A549 (cell line): ENCODE measurements at regions of chr2 and their contacts with region 1.

Region 1: DNA sequence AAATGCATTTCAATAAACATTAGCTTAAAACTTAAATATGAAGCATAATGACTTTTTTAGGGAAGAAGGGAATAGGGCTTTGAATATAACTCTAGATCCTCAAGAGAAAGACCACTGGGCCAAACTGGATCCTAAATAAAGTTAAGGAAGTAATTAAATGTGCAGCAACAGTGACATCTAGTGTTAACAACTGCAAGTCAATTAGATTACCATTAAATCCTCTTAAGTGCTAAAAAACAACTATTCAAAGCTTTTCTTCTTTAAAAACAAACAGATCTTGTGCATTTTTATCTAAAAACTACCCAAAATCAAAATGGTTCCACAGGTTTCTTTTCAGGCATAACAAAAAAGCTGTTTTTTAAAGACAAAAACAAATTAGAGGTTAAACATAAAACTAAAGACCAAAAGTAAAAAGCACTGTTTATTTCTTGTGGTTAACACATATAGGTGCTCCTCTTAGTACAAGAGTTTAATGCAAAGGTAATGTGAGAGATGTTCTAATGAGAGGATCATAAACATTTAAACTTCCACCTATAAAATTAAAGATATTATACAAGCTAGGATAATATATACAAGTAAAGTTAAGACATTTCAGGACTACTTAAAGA is 111.4 kb downstream of the THADA start:
- DNase-seq: peak; percentile 15 to 85
- ATAC-seq: peak in 1 of 2 experiments; percentile 80; a peak in 3 of 6 replicates
- H3K4me3 ChIP-seq: no peak overlapping the region
- H3K27ac ChIP-seq: peak overlapping the region in 1 of 2 experiments; percentile 46; a peak in 2 of 6 replicates
- H3K4me1 ChIP-seq: peaks cover 22% of the 10 kb centered on the region
- CTCF ChIP-seq: peak; percentile 96
- EP300 ChIP-seq: no peak
- POLR2A ChIP-seq: no peak
- RAD21 ChIP-seq: peak; percentile 87 to 97

Region 2: GRCh38 chr2:42944779-42945415 is 539.5 kb before region 1 on chr2:
- CTCF ChIA-PET with region 1: interaction called, 69 read pairs
- POLR2A ChIA-PET with region 1: no interaction called
- DNase-seq: peak; percentile 44 to 60
- ATAC-seq: peak; percentile 48 to 79; a peak in 4 of 6 replicates
- H3K4me3 ChIP-seq: no peak overlapping the region
- H3K27ac ChIP-seq: no peak overlapping the region
- H3K4me1 ChIP-seq: no peaks in the 10 kb centered on the region
- CTCF ChIP-seq: no peak
- EP300 ChIP-seq: no peak
- POLR2A ChIP-seq: no peak
- RAD21 ChIP-seq: no peak

Region 3: DNA sequence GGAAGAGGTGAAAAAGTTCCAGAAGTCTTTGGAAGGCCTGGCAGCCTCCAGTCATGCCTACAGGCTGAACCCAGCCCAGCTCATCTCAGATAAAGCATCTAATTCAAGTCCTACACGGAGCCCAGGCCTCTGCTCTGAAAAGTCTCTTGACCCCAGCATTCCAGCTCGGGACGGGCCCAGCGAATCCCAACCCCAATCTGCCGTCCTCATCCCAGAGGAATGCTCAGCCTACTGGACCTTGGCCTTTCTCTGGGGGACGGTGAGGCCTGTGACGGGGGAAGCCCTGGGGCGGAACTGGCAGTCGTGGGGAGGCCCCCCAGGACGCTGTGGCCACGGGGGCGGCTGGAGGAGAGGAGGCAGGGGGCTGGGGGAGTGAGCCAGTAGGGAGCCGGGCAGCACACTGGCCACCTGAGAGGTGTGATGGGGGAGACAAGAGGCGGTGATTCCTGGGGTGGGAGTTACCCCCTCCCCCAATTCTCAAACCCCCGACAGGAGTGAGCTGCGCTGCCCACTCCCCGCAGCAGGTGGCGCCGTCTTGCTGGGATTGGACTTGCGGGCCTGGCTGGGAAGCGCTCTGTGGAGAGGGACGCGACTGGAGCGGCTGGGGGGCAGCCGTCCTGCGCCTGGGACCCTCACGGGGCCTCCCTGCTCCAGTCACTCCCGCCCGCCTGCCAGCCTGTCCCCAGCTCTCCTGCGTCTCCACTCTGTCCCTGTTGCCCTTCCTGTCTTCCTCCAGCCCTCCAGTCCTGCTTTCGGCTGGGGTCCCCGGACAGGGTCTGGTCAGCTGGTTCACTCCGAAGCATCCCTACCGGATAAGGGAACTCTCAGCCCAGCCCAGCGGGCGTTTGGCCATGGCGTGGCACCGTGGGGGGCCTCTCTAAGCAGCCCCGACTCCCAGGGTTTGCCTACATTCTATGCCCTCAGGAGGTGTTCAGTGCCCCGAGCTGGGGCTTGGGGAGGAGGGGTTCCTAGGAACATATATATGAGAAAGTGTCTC is 509.4 kb before region 1 on chr2:
- CTCF ChIA-PET with region 1: interaction called, 43 read pairs
- POLR2A ChIA-PET with region 1: no interaction called
- DNase-seq: peak; percentile 58 to 64
- ATAC-seq: peak; percentile 60 to 86
- H3K4me3 ChIP-seq: peak overlapping the region; percentile 31
- H3K27ac ChIP-seq: peak overlapping the region; percentile 73 to 87
- H3K4me1 ChIP-seq: peaks cover 37% of the 10 kb centered on the region
- CTCF ChIP-seq: peak; percentile 94
- EP300 ChIP-seq: no peak
- POLR2A ChIP-seq: no peak
- RAD21 ChIP-seq: peak; percentile 99

Region 4: GRCh38 chr2:43265001-43265400 is 219.4 kb before region 1 on chr2:
- CTCF ChIA-PET with region 1: interaction called, 10 read pairs
- POLR2A ChIA-PET with region 1: no interaction called
- DNase-seq: no peak
- ATAC-seq: no peak
- H3K4me3 ChIP-seq: no peak overlapping the region
- H3K27ac ChIP-seq: no peak overlapping the region
- H3K4me1 ChIP-seq: peaks cover 1% of the 10 kb centered on the region; the same call in 1 of the 3 replicates
- CTCF ChIP-seq: no peak
- EP300 ChIP-seq: no peak
- POLR2A ChIP-seq: no peak
- RAD21 ChIP-seq: no peak

Region 5: GRCh38 chr2:43444989-43445645 is 39.3 kb before region 1 on chr2:
- CTCF ChIA-PET with region 1: interaction called, 12 read pairs
- POLR2A ChIA-PET with region 1: no interaction called
- DNase-seq: no peak
- ATAC-seq: no peak
- H3K4me3 ChIP-seq: no peak overlapping the region
- H3K27ac ChIP-seq: no peak overlapping the region
- H3K4me1 ChIP-seq: peaks cover 46% of the 10 kb centered on the region
- CTCF ChIP-seq: no peak
- EP300 ChIP-seq: no peak
- POLR2A ChIP-seq: no peak
- RAD21 ChIP-seq: no peak